ENCODE measurements at regions of chr10 and their contacts with region 1.

Region 1: GRCh38 chr10:93376372-93377293 is 105.5 kb downstream of the MYOF start:
- DNase-seq: peak; percentile 69
- H3K4me3 ChIP-seq: no peak overlapping the region
- H3K27ac ChIP-seq: peak overlapping the region; percentile 70 to 76
- H3K4me1 ChIP-seq: no peaks in the 10 kb centered on the region
- H3K27me3 ChIP-seq: no peaks in the 10 kb centered on the region
- CTCF ChIP-seq: peak; percentile 84 to 97 (median 96)
- POLR2A ChIP-seq: no peak

Region 2: GRCh38 chr10:92627845-92628480 is 748.7 kb before region 1 on chr10:
- intact Hi-C with region 1: no loop called
- DNase-seq: no peak
- H3K4me3 ChIP-seq: no peak overlapping the region
- H3K27ac ChIP-seq: no peak overlapping the region
- H3K4me1 ChIP-seq: no peaks in the 10 kb centered on the region
- H3K27me3 ChIP-seq: no peaks in the 10 kb centered on the region
- CTCF ChIP-seq: no peak
- POLR2A ChIP-seq: no peak

Region 3: GRCh38 chr10:93420091-93420490 is 43.5 kb after region 1 on chr10:
- intact Hi-C with region 1: loop called (anchors 5 kb)
- DNase-seq: no peak
- H3K4me3 ChIP-seq: no peak overlapping the region
- H3K27ac ChIP-seq: peak overlapping the region in 1 of 2 donors; percentile 14
- H3K4me1 ChIP-seq: peaks cover 6% of the 10 kb centered on the region
- H3K27me3 ChIP-seq: no peaks in the 10 kb centered on the region
- CTCF ChIP-seq: no peak
- POLR2A ChIP-seq: no peak

Region 4: GRCh38 chr10:93437088-93437945 is 60.7 kb after region 1 on chr10:
- intact Hi-C with region 1: loop called (anchors 5 kb)
- DNase-seq: peak; percentile 84
- H3K4me3 ChIP-seq: no peak overlapping the region
- H3K27ac ChIP-seq: peak overlapping the region; percentile 89 to 96
- H3K4me1 ChIP-seq: peaks cover 22% of the 10 kb centered on the region
- H3K27me3 ChIP-seq: no peaks in the 10 kb centered on the region
- CTCF ChIP-seq: no peak
- POLR2A ChIP-seq: peak; percentile 19

Measured in prostate gland (tissue), 2 donors.